CD4-positive, alpha-beta memory T cell (primary cell): ENCODE measurements at regions of chr6 and their contacts with region 1.

Region 1: GRCh38 chr6:3742426-3743344 is 8.8 kb downstream of the PXDC1 start:
- DNase-seq: peak; percentile 79 to 84 (median 81)
- H3K4me3 ChIP-seq: peak overlapping the region in 1 of 2 donors; percentile 26
- H3K4me3 Mint-ChIP-seq: peak overlapping the region; percentile 4 to 77 (median 61)
- H3K27ac ChIP-seq: no peak overlapping the region
- H3K27ac Mint-ChIP-seq: peak overlapping the region in 5 of 7 donors; percentile 34 to 83 (median 68)
- H3K4me1 ChIP-seq: peaks cover 12% of the 10 kb centered on the region
- H3K4me1 Mint-ChIP-seq: peaks cover 6 to 13% (median 11%) of the 10 kb centered on the region in 4 donors
- H3K27me3 ChIP-seq: no peaks in the 10 kb centered on the region
- H3K27me3 Mint-ChIP-seq: peaks cover 3 to 4% of the 10 kb centered on the region in 2 donors

Region 2: GRCh38 chr6:3732345-3733141 is 10.1 kb before region 1 on chr6:
- CTCF ChIA-PET with region 1: interaction called, 13 read pairs
- POLR2A ChIA-PET with region 1: no interaction called
- intact Hi-C with region 1: no loop called
- DNase-seq: peak; percentile 50 to 63 (median 58)
- H3K4me3 ChIP-seq: no peak overlapping the region
- H3K4me3 Mint-ChIP-seq: peak overlapping the region in 1 of 8 donors; percentile 22
- H3K27ac ChIP-seq: no peak overlapping the region
- H3K27ac Mint-ChIP-seq: peak overlapping the region in 1 of 7 donors; percentile 55
- H3K4me1 ChIP-seq: peaks cover 3% of the 10 kb centered on the region
- H3K4me1 Mint-ChIP-seq: peaks cover 0 to 4% (median 2%) of the 10 kb centered on the region in 4 donors
- H3K27me3 ChIP-seq: no peaks in the 10 kb centered on the region
- H3K27me3 Mint-ChIP-seq: peaks cover 3 to 5% of the 10 kb centered on the region in 2 donors

Region 3: DNA sequence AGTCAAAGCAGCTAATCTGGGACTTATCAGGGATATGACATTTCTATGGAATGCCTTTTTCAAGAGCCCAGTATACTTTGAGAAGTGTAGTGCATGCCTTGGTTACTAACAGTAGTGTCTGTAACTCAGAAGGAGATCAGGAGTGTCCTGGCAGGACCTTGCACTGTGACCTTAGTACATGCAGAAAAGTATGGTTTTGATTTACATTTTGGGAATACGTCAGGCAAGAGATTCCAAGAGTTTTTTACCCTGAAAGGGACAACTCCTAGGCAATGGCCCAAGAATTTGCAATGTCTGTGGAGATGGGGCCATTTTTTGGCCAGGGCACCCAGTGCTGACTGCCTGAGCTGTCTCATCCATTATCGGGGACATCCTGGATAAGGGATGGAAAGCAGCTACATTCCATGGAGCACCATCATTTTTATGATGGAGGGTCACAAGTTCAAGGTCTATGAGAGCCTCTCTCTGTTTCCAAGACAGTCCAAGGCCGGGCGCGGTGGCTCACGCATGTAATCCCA is 186.7 kb after region 1 on chr6:
- CTCF ChIA-PET with region 1: interaction called, 68 read pairs
- POLR2A ChIA-PET with region 1: interaction called, 5 read pairs
- intact Hi-C with region 1: loop called (anchors 1 kb)
- DNase-seq: no peak
- H3K4me3 ChIP-seq: no peak overlapping the region
- H3K4me3 Mint-ChIP-seq: no peak overlapping the region
- H3K27ac ChIP-seq: no peak overlapping the region
- H3K27ac Mint-ChIP-seq: no peak overlapping the region
- H3K4me1 ChIP-seq: no peaks in the 10 kb centered on the region
- H3K4me1 Mint-ChIP-seq: no peaks in the 10 kb centered on the region
- H3K27me3 ChIP-seq: no peaks in the 10 kb centered on the region
- H3K27me3 Mint-ChIP-seq: no peaks in the 10 kb centered on the region

Region 4: DNA sequence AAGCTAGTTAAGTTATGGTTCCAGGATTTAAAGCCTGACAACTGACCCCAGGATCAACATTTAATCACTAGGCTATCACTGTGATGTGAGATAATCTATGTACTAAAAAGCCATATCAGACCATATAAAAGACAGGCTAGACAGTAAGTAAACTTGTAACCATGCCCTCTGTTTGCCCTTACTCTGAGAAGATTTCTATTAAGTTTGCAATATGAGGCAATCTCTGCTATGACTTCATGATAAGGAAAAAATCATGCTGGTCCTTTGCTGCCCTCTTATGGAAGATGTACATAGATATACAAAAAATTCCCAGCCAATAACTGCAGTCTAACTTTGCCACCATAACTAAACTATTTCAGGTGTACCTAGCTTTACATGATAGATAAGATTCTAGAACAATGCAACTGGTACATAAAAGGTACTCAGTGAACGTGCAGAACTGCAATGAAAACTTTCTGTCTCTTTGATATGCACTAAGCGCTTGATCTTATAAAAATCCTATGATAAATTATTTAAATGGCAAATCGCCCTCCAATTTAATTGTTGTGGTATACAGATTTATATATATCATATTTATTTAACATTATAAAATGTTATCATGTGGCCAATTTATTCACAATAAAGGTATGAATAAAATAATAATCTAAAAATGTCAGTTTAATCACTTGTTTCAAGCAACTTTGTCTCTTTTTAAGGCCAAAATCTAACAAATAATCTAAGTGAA is 265.8 kb after region 1 on chr6:
- CTCF ChIA-PET with region 1: interaction called, 22 read pairs
- POLR2A ChIA-PET with region 1: no interaction called
- intact Hi-C with region 1: loop called (anchors 1 kb)
- DNase-seq: peak in 4 of 5 donors; percentile 57 to 62 (median 58)
- H3K4me3 ChIP-seq: no peak overlapping the region
- H3K4me3 Mint-ChIP-seq: no peak overlapping the region
- H3K27ac ChIP-seq: no peak overlapping the region
- H3K27ac Mint-ChIP-seq: peak overlapping the region in 5 of 7 donors; percentile 18 to 87 (median 37)
- H3K4me1 ChIP-seq: peaks cover 47% of the 10 kb centered on the region
- H3K4me1 Mint-ChIP-seq: peaks cover 46 to 62% (median 54%) of the 10 kb centered on the region in 4 donors
- H3K27me3 ChIP-seq: no peaks in the 10 kb centered on the region
- H3K27me3 Mint-ChIP-seq: no peaks in the 10 kb centered on the region

Region 5: GRCh38 chr6:4210629-4211423 is 468.1 kb after region 1 on chr6:
- CTCF ChIA-PET with region 1: interaction called, 15 read pairs
- POLR2A ChIA-PET with region 1: no interaction called
- intact Hi-C with region 1: loop called (anchors 1 kb)
- DNase-seq: peak in 4 of 5 donors; percentile 25 to 39 (median 33)
- H3K4me3 ChIP-seq: no peak overlapping the region
- H3K4me3 Mint-ChIP-seq: peak overlapping the region in 2 of 8 donors; percentile 6 to 22
- H3K27ac ChIP-seq: no peak overlapping the region
- H3K27ac Mint-ChIP-seq: peak overlapping the region in 2 of 7 donors; percentile 39 to 50
- H3K4me1 ChIP-seq: peaks cover 10% of the 10 kb centered on the region
- H3K4me1 Mint-ChIP-seq: peaks cover 9 to 21% (median 18%) of the 10 kb centered on the region in 4 donors
- H3K27me3 ChIP-seq: no peaks in the 10 kb centered on the region
- H3K27me3 Mint-ChIP-seq: peaks cover 0 to 14% of the 10 kb centered on the region in 2 donors